ENCODE measurements at regions of chr19 and their contacts with region 1.

Region 1: DNA sequence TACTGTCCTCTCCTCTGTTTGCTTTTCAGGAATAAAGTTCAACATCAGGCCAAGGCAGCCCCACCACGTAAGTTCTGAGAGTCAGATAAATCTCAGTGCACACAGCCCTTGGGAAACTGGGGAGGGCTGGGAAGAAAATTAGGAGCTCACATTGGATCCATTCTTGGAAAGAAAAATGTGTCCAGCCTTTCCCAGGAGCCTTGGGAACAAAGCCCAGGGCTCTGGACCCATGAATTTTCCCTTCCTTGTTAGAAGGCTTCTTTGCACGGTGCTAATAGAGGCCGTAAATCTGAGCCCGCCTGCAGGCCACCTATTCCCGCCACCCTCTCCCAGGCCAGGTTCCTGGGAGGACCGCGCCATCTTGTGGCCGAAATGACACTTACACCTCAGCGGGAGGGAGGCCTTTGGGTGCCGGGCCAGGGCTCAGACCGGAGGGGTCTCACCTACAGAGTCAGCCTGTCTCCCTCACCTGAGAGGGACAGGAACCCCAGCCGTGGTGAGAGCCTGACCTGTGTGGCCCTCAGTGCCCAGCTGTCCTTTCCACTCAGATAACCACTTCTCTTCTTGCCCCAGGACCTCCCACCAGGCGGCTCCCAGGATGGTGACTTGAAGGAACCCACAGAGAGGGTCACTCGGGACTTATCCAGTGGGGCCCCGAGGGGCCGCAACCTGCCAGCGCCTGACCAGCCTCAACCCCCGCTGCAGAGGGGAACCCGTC is 25.1 kb upstream of the KCTD15 start:
- DNase-seq: peak; percentile 36
- H3K4me3 ChIP-seq: no peak overlapping the region
- H3K27ac ChIP-seq: no peak overlapping the region
- H3K4me1 ChIP-seq: no peaks in the 10 kb centered on the region
- H3K27me3 ChIP-seq: no peaks in the 10 kb centered on the region
- CTCF ChIP-seq: peak; percentile 77 to 86

Region 2: DNA sequence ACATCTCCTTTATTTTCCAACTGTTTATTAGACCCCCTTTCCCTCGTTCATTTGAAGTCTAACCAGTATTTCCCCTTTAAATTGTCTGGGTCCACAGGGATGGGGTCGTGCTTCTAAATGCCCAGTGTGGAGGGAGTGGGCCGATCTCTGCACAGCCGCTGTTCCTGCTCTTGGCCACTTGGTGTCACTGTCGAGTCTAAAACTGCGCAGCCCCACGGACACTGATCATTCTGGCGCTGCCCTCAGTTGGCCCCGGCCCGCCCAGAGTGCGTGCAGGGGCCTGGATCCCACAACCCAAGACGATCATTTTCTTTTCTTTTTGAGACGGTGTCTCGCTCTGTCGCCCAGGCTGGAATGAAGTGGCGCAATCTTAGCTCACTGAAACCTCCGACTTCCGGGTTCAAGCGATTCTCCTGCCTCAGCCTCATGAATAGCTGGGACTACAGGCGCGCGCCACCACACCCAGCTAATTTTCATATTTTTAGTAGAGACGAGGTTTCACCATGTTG is 627.6 kb before region 1 on chr19:
- CTCF ChIA-PET with region 1: no interaction called
- dilution Hi-C with region 1: no loop called
- in situ Hi-C with region 1: no loop called
- intact Hi-C with region 1: loop called (anchors 5 kb)
- DNase-seq: peak; percentile 25
- H3K4me3 ChIP-seq: no peak overlapping the region
- H3K27ac ChIP-seq: no peak overlapping the region
- H3K4me1 ChIP-seq: no peaks in the 10 kb centered on the region
- H3K27me3 ChIP-seq: no peaks in the 10 kb centered on the region
- CTCF ChIP-seq: peak; percentile 91 to 93

Region 3: DNA sequence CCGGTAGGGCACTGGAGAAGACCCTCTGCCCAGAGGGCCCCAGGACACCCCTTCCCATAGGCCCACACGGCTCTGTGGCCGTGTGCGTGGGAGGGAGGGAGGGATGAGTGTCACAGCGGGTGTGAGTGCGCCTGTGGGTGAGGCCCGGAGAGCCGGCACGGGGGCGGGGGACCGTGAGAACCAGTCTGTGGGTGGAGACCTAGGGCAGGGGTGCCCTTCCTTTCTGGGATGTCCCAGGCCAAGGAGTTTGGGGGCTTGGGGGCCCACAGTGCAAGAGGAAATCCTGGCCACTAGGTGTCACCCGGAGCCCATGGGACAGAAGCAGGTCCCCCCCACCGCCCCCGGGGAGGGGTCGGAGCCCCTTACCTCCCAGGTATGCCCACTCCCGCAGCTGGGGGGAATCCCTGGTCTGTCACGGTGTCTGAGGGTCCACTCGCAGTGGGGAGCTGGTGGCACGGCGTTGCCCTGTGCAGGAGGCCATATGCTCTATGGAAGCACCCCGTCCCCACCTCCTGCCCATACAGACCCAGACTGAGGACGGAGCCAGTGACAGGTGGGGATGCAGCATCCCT is 529.9 kb before region 1 on chr19:
- CTCF ChIA-PET with region 1: no interaction called
- dilution Hi-C with region 1: loop called (anchors 10 kb)
- in situ Hi-C with region 1: loop called (anchors 10 to 25 kb)
- intact Hi-C with region 1: no loop called
- DNase-seq: peak; percentile 46
- H3K4me3 ChIP-seq: no peak overlapping the region
- H3K27ac ChIP-seq: no peak overlapping the region
- H3K4me1 ChIP-seq: peaks cover 10% of the 10 kb centered on the region
- H3K27me3 ChIP-seq: no peaks in the 10 kb centered on the region
- CTCF ChIP-seq: peak; percentile 25 to 70

Region 4: DNA sequence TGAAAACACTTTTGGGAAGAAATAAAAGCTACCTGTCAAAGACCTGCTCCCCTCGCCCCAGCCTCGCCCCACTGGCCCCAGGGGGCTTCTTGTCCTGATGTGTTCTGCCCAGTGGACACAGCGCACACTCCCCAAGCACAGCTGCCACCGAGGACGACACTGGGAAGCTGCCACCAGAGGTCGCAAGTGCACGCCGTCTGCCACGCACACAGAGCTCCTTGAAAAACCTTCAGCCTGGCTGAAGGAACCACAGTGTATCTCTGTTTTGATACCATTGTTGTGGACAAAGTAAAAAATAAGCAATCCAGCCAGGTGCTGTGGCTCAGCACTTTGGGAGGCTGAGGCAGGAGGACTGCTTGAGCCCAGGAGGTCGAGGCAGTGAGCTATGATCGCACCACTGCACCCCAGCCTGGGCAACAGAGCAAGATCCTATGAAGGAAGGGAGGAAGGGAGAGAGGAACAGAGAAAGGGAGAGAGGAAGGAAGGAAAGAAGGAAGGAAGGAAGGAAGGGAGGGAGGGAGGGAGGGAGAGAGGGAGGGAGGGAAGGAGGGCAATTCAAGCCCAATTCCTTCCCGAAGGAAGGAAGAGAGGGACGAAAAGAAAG is 340.8 kb before region 1 on chr19:
- CTCF ChIA-PET with region 1: interaction called, 8 read pairs
- dilution Hi-C with region 1: no loop called
- in situ Hi-C with region 1: loop called (anchors 5 kb)
- intact Hi-C with region 1: loop called (anchors 1 kb)
- DNase-seq: peak; percentile 44
- H3K4me3 ChIP-seq: no peak overlapping the region
- H3K27ac ChIP-seq: no peak overlapping the region
- H3K4me1 ChIP-seq: no peaks in the 10 kb centered on the region
- H3K27me3 ChIP-seq: no peaks in the 10 kb centered on the region
- CTCF ChIP-seq: peak; percentile 80 to 91

Region 5: DNA sequence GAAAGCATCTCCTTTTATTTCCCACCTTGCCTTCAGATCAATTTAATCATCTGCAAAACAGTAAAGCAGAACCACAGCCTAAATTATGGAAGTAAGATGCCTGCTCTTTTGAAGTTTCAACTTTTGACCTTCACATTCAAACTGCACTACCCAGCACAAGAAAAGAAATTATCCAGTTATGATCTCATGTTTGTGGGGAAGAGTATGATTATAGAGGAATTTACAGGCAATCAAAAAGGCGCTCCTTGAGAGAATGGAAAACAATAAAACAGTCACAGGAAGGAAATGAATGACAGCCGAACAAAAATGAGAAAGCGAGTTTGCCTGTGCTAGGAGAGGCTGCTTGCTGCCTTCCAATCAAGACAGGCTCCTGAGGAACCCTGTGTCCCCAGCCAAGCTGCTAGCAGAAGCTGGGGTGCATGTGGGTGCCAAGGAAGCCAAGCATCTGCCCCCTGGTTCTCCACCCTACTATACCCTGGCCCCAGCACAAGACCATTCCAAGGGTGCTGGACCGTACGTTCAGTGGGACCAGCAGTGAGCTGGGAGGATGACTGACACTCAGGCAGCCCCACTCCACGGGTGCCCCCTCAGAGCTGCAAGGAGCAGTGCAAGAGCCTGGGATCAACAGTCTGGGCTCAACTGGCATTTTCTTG is 297.8 kb before region 1 on chr19:
- CTCF ChIA-PET with region 1: no interaction called
- dilution Hi-C with region 1: no loop called
- in situ Hi-C with region 1: no loop called
- intact Hi-C with region 1: no loop called
- DNase-seq: no peak
- H3K4me3 ChIP-seq: no peak overlapping the region
- H3K27ac ChIP-seq: no peak overlapping the region
- H3K4me1 ChIP-seq: no peaks in the 10 kb centered on the region
- H3K27me3 ChIP-seq: no peaks in the 10 kb centered on the region
- CTCF ChIP-seq: no peak

Region 6: DNA sequence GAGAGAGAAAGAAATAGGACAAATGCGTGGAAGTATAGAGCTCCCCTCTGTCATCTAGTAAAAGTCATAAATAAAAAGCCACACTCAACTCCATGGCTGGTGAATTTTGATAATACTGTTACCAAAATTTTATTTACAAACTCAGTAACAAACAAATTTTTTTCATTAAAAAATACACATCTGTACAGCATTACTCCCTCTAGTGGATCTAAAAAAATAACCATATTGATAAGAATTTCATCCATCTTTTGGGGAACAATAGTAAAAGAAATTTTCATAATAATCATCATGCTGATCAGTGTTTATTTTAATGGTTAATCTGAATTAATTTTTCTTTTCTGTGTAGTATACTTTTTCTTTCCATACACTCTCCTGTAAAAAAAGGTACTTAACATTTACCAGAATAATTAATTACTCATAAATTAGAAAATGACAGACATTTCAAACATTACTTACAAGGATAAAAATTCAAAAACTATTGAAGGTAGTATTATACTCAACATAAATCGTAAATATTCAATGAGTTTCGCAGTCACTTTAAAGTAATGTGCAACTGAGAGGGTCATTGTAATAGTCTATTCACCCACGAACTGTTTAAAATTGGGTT is 227.3 kb after region 1 on chr19:
- CTCF ChIA-PET with region 1: no interaction called
- dilution Hi-C with region 1: loop called (anchors 5 kb)
- in situ Hi-C with region 1: loop called in 1 of 2 experiments (anchors 5 kb)
- intact Hi-C with region 1: no loop called
- DNase-seq: no peak
- H3K4me3 ChIP-seq: no peak overlapping the region
- H3K27ac ChIP-seq: no peak overlapping the region
- H3K4me1 ChIP-seq: no peaks in the 10 kb centered on the region
- H3K27me3 ChIP-seq: no peaks in the 10 kb centered on the region
- CTCF ChIP-seq: peak; percentile 21 to 41

Measured in mammary epithelial cell (primary cell).